Naive thymus-derived CD4-positive, alpha-beta T cell (primary cell): ENCODE measurements at regions of chrX and their contacts with region 1.

Region 1: GRCh38 chrX:47217642-47218279 is 720 bp upstream of the CDK16 start:
- DNase-seq: peak in 8 of 9 donors; percentile 81 to 100 (median 98)
- ATAC-seq: peak; percentile 86
- H3K4me3 ChIP-seq: peak overlapping the region; percentile 98
- H3K4me3 Mint-ChIP-seq: peak overlapping the region; percentile 89 to 99 (median 95)
- H3K27ac ChIP-seq: peak overlapping the region; percentile 97
- H3K27ac Mint-ChIP-seq: peak overlapping the region; percentile 98 to 100 (median 99)
- H3K4me1 ChIP-seq: peaks cover 16 to 20% of the 10 kb centered on the region in 2 donors
- H3K4me1 Mint-ChIP-seq: peaks cover 26 to 44% (median 41%) of the 10 kb centered on the region in 7 donors
- H3K27me3 ChIP-seq: no peaks in the 10 kb centered on the region
- H3K27me3 Mint-ChIP-seq: peaks cover 0 to 2% (median 0%) of the 10 kb centered on the region in 5 donors

Region 2: DNA sequence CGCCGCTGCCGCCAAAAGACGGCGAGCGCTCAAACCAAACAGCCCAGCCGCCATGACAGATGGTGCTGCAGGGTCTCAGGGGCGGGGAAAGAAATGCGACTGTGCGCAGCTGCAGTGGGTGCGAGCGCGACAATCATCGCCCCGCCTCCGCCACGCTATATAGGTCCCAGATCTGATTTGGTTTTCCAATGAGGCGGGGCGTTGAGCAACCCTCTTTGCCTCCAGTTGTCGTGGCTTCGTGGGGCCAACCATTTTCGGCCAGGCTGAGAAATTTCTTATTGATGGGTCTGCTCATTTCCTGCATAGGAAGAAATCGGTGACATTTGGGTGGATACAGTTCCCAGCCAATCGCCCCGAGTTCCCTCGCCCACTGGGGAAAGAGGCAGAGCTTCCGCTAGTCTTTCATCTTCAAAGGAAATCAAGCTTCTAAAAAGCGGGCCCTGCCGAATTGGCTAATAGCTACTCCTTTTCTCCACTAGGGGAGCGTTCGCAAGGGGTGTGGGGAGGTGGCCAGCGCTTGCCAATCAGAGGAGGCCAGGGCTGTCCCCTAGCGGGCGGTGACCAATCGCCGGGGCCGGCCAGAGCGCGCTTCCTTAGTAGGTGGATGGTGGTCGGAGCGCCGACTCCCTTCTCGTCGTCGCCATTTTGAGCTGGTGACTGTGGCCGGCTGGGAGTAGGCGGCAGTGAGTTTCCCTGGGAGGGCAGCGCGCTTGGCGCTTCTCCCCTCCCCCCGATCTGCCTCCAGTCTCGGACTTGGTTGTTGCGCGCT is 73.0 kb before region 1 on chrX and contains the starts of genes NDUFB11 and RBM10:
- CTCF ChIA-PET with region 1: no interaction called
- POLR2A ChIA-PET with region 1: interaction called, 16 read pairs
- intact Hi-C with region 1: loop called (anchors 1 to 2 kb)
- DNase-seq: peak; percentile 64 to 90 (median 87)
- ATAC-seq: peak; percentile 95
- H3K4me3 ChIP-seq: peak within 1 kb of the TSS; percentile 77
- H3K4me3 Mint-ChIP-seq: peak within 1 kb of the TSS; percentile 92 to 99 (median 96)
- H3K27ac ChIP-seq: peak within 1 kb of the TSS; percentile 94
- H3K27ac Mint-ChIP-seq: peak within 1 kb of the TSS; percentile 93 to 99 (median 96)
- H3K4me1 ChIP-seq: peaks cover 6 to 12% of the 10 kb centered on the region in 2 donors
- H3K4me1 Mint-ChIP-seq: peaks cover 6 to 42% (median 26%) of the 10 kb centered on the region in 7 donors
- H3K27me3 ChIP-seq: no peaks in the 10 kb centered on the region
- H3K27me3 Mint-ChIP-seq: no peaks in the 10 kb centered on the region
- total RNA-seq, gene NDUFB11: 51.3 to 92.5 (median 55.2) TPM
- total RNA-seq, gene RBM10: 31.8 to 55.6 (median 47.6) TPM

Region 3: DNA sequence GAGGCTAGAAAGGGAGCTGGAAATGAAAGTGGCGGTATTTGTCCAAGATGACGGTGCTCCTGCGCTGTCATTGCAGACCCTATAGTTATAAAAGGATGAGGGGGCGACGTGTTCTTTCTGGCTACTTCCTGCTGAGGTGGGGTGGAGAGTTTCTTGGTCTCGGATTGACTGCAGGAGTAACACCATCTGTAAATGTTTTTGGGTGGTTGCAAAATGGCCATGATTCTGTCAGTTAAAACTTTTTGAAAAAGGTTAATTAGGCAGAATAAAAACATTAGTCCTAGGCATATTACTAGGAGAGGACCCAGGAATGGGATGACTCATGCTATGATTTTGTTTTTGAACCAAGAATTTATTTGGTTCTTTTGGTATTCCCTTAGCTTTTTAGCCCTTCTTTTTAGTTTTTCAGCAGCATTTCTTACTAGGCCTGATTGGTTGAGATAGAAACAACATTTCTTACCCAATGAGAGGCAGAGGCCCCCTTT is 68.1 kb after region 1 on chrX:
- CTCF ChIA-PET with region 1: no interaction called
- POLR2A ChIA-PET with region 1: no interaction called
- intact Hi-C with region 1: no loop called
- DNase-seq: no peak
- ATAC-seq: no peak
- H3K4me3 ChIP-seq: no peak overlapping the region
- H3K4me3 Mint-ChIP-seq: no peak overlapping the region
- H3K27ac ChIP-seq: no peak overlapping the region
- H3K27ac Mint-ChIP-seq: no peak overlapping the region
- H3K4me1 ChIP-seq: no peaks in the 10 kb centered on the region
- H3K4me1 Mint-ChIP-seq: peaks cover 0 to 4% (median 2%) of the 10 kb centered on the region in 7 donors
- H3K27me3 ChIP-seq: no peaks in the 10 kb centered on the region
- H3K27me3 Mint-ChIP-seq: no peaks in the 10 kb centered on the region

Region 4: DNA sequence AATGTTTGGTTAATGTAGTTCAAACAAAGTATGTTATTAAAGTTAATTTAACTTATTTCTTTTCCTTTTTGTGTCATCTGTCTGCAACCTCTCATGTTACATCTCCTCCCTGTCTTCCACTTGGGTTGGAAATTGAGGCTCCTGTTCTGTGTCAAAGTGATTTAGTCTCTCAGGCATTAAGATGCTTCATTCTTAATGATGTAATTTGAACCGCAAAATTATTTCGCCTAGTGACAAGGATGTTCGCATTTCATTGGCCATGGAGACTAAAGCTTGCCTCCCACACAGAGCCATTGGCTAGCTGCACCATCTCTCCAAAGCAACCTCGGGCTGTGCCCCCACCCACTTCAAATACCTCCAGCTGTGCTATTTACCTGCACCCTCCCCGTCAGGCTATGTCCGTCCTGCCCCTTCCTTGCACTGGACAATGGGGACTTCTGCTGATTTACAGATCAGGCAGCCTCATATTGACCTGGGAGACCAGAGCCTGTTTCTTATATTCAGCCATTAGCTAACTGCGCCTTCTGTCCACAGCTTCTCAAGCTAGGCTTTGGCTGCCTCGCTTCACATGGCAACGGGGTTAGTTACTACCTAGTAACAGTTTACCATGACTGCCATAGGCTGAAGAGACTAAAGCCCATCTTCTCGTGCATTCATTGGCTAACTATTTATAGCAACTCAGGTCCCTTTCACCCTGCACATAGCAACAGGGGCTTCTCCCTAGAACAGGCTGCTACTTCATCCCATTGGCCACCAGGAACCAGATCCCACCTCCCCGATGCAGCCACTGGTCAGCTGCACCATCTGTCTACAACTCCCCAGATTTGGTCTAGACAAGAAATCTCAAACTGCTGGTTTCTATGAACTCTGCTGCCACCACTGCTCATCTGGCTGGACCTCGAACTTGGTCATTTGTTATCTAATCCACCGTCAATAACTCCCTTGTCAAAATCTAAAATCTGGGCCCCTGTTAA is 144.1 kb after region 1 on chrX:
- CTCF ChIA-PET with region 1: no interaction called
- POLR2A ChIA-PET with region 1: interaction called, 3 read pairs
- intact Hi-C with region 1: loop called (anchors 1 kb)
- DNase-seq: peak in 3 of 9 donors; percentile 8 to 16 (median 10)
- ATAC-seq: peak; percentile 75
- H3K4me3 ChIP-seq: no peak overlapping the region
- H3K4me3 Mint-ChIP-seq: peak overlapping the region in 5 of 10 donors; percentile 3 to 29 (median 24)
- H3K27ac ChIP-seq: no peak overlapping the region
- H3K27ac Mint-ChIP-seq: peak overlapping the region in 4 of 9 donors; percentile 15 to 40 (median 31)
- H3K4me1 ChIP-seq: peaks cover 6 to 9% of the 10 kb centered on the region in 2 donors
- H3K4me1 Mint-ChIP-seq: peaks cover 10 to 48% (median 30%) of the 10 kb centered on the region in 7 donors
- H3K27me3 ChIP-seq: no peaks in the 10 kb centered on the region
- H3K27me3 Mint-ChIP-seq: no peaks in the 10 kb centered on the region

Region 5: GRCh38 chrX:47482512-47483309 is 264.9 kb after region 1 on chrX and contains the start of gene ZNF41:
- CTCF ChIA-PET with region 1: no interaction called
- POLR2A ChIA-PET with region 1: no interaction called
- intact Hi-C with region 1: loop called (anchors 1 to 2 kb)
- DNase-seq: peak; percentile 48 to 84 (median 76)
- ATAC-seq: peak; percentile 95
- H3K4me3 ChIP-seq: peak within 1 kb of the TSS; percentile 85
- H3K4me3 Mint-ChIP-seq: peak within 1 kb of the TSS; percentile 81 to 97 (median 90)
- H3K27ac ChIP-seq: peak within 1 kb of the TSS; percentile 88
- H3K27ac Mint-ChIP-seq: peak within 1 kb of the TSS; percentile 82 to 98 (median 96)
- H3K4me1 ChIP-seq: peaks cover 9 to 22% of the 10 kb centered on the region in 2 donors
- H3K4me1 Mint-ChIP-seq: peaks cover 22 to 50% (median 37%) of the 10 kb centered on the region in 7 donors
- H3K27me3 ChIP-seq: no peaks in the 10 kb centered on the region
- H3K27me3 Mint-ChIP-seq: no peaks in the 10 kb centered on the region
- total RNA-seq, gene ZNF41: 7.5 to 17.8 (median 14.7) TPM

Region 6: GRCh38 chrX:47658684-47659515 is 441.1 kb after region 1 on chrX and contains the start of gene UXT:
- CTCF ChIA-PET with region 1: no interaction called
- POLR2A ChIA-PET with region 1: no interaction called
- intact Hi-C with region 1: loop called in 1 of 2 experiments (anchors 2 kb)
- DNase-seq: peak; percentile 75 to 92 (median 89)
- ATAC-seq: peak; percentile 91
- H3K4me3 ChIP-seq: peak within 1 kb of the TSS; percentile 86
- H3K4me3 Mint-ChIP-seq: peak within 1 kb of the TSS; percentile 80 to 95 (median 92)
- H3K27ac ChIP-seq: peak within 1 kb of the TSS; percentile 99
- H3K27ac Mint-ChIP-seq: peak within 1 kb of the TSS; percentile 94 to 99 (median 97)
- H3K4me1 ChIP-seq: peaks cover 4 to 8% of the 10 kb centered on the region in 2 donors
- H3K4me1 Mint-ChIP-seq: peaks cover 9 to 34% (median 21%) of the 10 kb centered on the region in 7 donors
- H3K27me3 ChIP-seq: no peaks in the 10 kb centered on the region
- H3K27me3 Mint-ChIP-seq: no peaks in the 10 kb centered on the region
- total RNA-seq, gene UXT: 160 to 235 (median 201) TPM

Region 7: GRCh38 chrX:48917139-48918001 is 1699.6 kb after region 1 on chrX:
- CTCF ChIA-PET with region 1: no interaction called
- POLR2A ChIA-PET with region 1: no interaction called
- intact Hi-C with region 1: loop called in 1 of 2 experiments (anchors 5 kb)
- DNase-seq: peak; percentile 73 to 92 (median 88)
- ATAC-seq: peak; percentile 65
- H3K4me3 ChIP-seq: peak overlapping the region; percentile 75
- H3K4me3 Mint-ChIP-seq: peak overlapping the region; percentile 87 to 99 (median 96)
- H3K27ac ChIP-seq: peak overlapping the region; percentile 95
- H3K27ac Mint-ChIP-seq: peak overlapping the region; percentile 89 to 99 (median 96)
- H3K4me1 ChIP-seq: peaks cover 46 to 49% of the 10 kb centered on the region in 2 donors
- H3K4me1 Mint-ChIP-seq: peaks cover 11 to 82% (median 48%) of the 10 kb centered on the region in 7 donors
- H3K27me3 ChIP-seq: no peaks in the 10 kb centered on the region
- H3K27me3 Mint-ChIP-seq: peaks cover 0 to 5% (median 0%) of the 10 kb centered on the region in 5 donors